ENCODE measurements at regions of chr1 and their contacts with region 1.

Region 1: GRCh38 chr1:36420836-36421664 is 23.3 kb upstream of the LSM10 start:
- DNase-seq: peak; percentile 79 to 93 (median 89)
- ATAC-seq: peak; percentile 99
- H3K4me3 ChIP-seq: no peak overlapping the region
- H3K27ac ChIP-seq: no peak overlapping the region
- H3K4me1 ChIP-seq: peaks cover 0 to 3% of the 10 kb centered on the region in 2 experiments; a peak in 2 of 5 replicates
- H3K27me3 ChIP-seq: no peaks in the 10 kb centered on the region
- CTCF ChIP-seq: peak; percentile 96 to 99 (median 99)
- EP300 ChIP-seq: peak; percentile 46; the same call in 1 of the 2 replicates
- POLR2A ChIP-seq: no peak
- RAD21 ChIP-seq: peak; percentile 97 to 99

Region 2: DNA sequence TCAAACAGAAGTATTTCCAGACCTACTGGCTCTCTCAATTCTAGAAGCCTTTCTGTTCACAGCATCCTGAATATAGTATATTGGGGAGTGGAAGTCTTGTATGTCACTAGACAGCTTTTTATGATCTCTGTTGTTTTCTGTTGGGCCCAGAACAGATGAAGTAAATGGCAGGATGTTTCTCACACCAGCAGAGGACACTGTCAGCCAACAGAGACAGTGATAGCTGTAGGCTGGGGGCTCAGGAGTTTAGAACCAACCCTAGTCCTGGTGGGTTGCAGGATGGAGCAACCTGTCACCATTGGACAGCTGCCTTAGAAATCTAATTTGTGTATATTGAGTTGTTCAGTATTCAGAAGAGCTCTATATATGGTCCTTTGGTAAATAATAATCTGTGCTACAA is 521.1 kb before region 1 on chr1:
- CTCF ChIA-PET with region 1: no interaction called
- POLR2A ChIA-PET with region 1: no interaction called
- in situ Hi-C with region 1: no loop called
- intact Hi-C with region 1: no loop called
- DNase-seq: no peak
- ATAC-seq: peak; percentile 62; the same call in 2 of the 3 replicates
- H3K4me3 ChIP-seq: no peak overlapping the region
- H3K27ac ChIP-seq: no peak overlapping the region
- H3K4me1 ChIP-seq: no peaks in the 10 kb centered on the region
- H3K27me3 ChIP-seq: no peaks in the 10 kb centered on the region
- CTCF ChIP-seq: peak; percentile 19 to 36 (median 21); a peak in 3 of 6 replicates
- EP300 ChIP-seq: no peak
- POLR2A ChIP-seq: no peak
- RAD21 ChIP-seq: peak in 1 of 2 experiments; percentile 51; a peak in 2 of 4 replicates

Region 3: DNA sequence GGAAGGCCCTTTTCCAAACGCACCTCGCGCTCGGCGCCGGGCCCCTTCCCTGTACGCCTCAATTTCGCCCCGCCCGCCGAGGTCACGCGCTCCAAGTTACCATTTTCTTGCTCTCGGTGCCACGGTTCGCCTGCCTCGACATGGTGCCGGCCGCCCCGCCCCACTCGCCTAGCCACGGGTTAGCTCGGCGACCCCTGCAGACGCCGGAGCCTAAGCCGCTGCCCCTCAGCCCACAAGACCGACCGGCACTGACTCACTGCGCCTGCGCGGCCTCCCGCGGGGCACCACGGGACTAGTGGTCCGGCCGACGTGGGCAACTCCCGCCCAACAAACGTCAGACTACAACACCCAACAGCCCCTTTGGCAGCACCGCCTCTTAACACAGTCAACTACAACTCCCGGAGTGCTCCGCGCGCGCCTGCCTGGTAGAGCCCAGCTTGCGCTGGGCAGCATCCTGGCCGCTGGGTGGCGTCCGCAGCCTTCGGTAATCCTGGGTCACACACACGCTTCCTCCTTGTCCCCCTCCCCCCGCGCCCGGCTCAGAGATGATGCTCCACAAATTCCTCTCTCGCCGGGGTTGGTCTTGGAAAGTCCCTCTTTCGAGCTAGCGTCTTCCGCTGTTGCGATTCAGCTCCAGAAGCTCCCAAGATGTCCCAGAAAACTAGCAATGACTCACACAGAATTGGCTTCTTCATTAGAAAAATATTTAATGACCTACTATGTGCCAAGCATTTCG is 271.6 kb before region 1 on chr1 and contains the start of gene TRAPPC3:
- CTCF ChIA-PET with region 1: interaction called, 4 read pairs
- POLR2A ChIA-PET with region 1: interaction called, 3 read pairs
- in situ Hi-C with region 1: no loop called
- intact Hi-C with region 1: loop called (anchors 1 kb)
- DNase-seq: peak; percentile 98 to 100 (median 99)
- ATAC-seq: peak; percentile 95
- H3K4me3 ChIP-seq: peak within 1 kb of the TSS; percentile 69
- H3K27ac ChIP-seq: peak within 1 kb of the TSS; percentile 87
- H3K4me1 ChIP-seq: peaks cover 31 to 34% of the 10 kb centered on the region in 2 experiments
- H3K27me3 ChIP-seq: no peaks in the 10 kb centered on the region
- CTCF ChIP-seq: peak; percentile 97 to 99 (median 99)
- EP300 ChIP-seq: peak; percentile 43; the same call in 1 of the 2 replicates
- POLR2A ChIP-seq: peak; percentile 95
- RAD21 ChIP-seq: peak; percentile 99 to 100
- polyA plus RNA-seq, gene TRAPPC3: 20.6 to 41.8 TPM

Region 4: GRCh38 chr1:36285448-36286101 is 135.5 kb before region 1 on chr1:
- CTCF ChIA-PET with region 1: interaction called, 7 read pairs
- POLR2A ChIA-PET with region 1: no interaction called
- in situ Hi-C with region 1: no loop called
- intact Hi-C with region 1: loop called (anchors 5 kb)
- DNase-seq: peak; percentile 77 to 93 (median 80)
- ATAC-seq: peak; percentile 95
- H3K4me3 ChIP-seq: no peak overlapping the region
- H3K27ac ChIP-seq: no peak overlapping the region
- H3K4me1 ChIP-seq: no peaks in the 10 kb centered on the region
- H3K27me3 ChIP-seq: no peaks in the 10 kb centered on the region
- CTCF ChIP-seq: peak; percentile 77 to 91 (median 81)
- EP300 ChIP-seq: no peak
- POLR2A ChIP-seq: no peak
- RAD21 ChIP-seq: peak; percentile 88 to 93

Region 5: GRCh38 chr1:36351227-36351977 is 69.6 kb before region 1 on chr1:
- CTCF ChIA-PET with region 1: interaction called, 3 read pairs
- POLR2A ChIA-PET with region 1: interaction called, 4 read pairs
- in situ Hi-C with region 1: loop called (anchors 5 kb)
- intact Hi-C with region 1: no loop called
- DNase-seq: no peak
- ATAC-seq: no peak
- H3K4me3 ChIP-seq: no peak overlapping the region
- H3K27ac ChIP-seq: no peak overlapping the region
- H3K4me1 ChIP-seq: peaks cover 5 to 16% of the 10 kb centered on the region in 2 experiments; a peak in 4 of 5 replicates
- H3K27me3 ChIP-seq: no peaks in the 10 kb centered on the region
- CTCF ChIP-seq: no peak
- EP300 ChIP-seq: no peak
- POLR2A ChIP-seq: no peak
- RAD21 ChIP-seq: no peak

Region 6: DNA sequence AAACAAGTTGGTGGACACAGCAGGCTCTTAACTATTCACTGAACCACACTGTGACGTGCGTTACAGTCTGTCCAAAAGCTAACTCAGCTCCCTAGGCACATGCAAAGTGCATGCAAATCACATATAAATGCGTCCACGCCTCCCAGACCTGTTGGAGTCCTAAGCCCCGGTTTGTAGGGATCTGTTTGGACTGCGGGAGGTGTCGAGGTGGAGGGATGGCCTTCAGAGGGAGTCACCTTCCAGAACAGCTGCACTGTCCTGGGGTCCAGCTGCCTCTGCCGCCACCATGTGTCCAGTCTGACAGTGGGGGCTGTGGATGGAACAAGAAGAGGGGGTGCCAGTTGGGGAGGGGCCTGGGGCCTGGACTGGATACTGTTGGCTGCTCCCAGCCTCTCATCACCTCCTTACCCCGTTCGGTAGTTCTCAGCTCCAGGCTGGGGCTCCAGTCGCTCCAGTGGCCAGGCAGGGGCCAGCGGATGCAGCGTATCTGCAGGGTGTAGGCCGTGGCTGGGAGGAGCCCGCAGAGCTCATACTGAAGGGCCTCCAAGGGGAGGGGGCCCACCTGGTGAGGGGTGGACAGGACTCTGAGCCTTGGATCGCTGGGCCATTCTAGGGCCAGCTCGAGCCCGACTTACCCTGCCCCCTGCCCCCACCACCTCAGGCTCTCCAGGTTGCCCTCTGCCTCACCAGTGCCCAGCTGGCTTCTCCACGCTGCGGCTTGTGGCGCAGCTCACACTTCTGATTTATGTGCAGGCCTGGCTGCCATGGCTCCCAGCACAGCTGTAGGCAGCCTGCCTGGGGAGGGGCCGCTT is 51.0 kb after region 1 on chr1:
- CTCF ChIA-PET with region 1: no interaction called
- POLR2A ChIA-PET with region 1: no interaction called
- in situ Hi-C with region 1: no loop called
- intact Hi-C with region 1: no loop called
- DNase-seq: no peak
- ATAC-seq: peak; percentile 52
- H3K4me3 ChIP-seq: no peak overlapping the region
- H3K27ac ChIP-seq: no peak overlapping the region
- H3K4me1 ChIP-seq: peaks cover 0 to 27% of the 10 kb centered on the region in 2 experiments; a peak in 3 of 5 replicates
- H3K27me3 ChIP-seq: no peaks in the 10 kb centered on the region
- CTCF ChIP-seq: 0 out of 6 replicates have a peak, but pooled peaks of 1 of the 3 experiments have one; percentile 18
- EP300 ChIP-seq: no peak
- POLR2A ChIP-seq: no peak
- RAD21 ChIP-seq: no peak

Measured in K562 (cell line).